ENCODE measurements at regions of chr16 and their contacts with region 1.

Region 1: GRCh38 chr16:56700195-56700594 is 17.9 kb downstream of the MT1X start:
- DNase-seq: no peak
- ATAC-seq: no peak
- H3K4me3 Mint-ChIP-seq: no peak overlapping the region
- H3K27ac Mint-ChIP-seq: no peak overlapping the region
- H3K4me1 Mint-ChIP-seq: peaks cover 10% of the 10 kb centered on the region
- H3K27me3 Mint-ChIP-seq: no peaks in the 10 kb centered on the region

Region 2: DNA sequence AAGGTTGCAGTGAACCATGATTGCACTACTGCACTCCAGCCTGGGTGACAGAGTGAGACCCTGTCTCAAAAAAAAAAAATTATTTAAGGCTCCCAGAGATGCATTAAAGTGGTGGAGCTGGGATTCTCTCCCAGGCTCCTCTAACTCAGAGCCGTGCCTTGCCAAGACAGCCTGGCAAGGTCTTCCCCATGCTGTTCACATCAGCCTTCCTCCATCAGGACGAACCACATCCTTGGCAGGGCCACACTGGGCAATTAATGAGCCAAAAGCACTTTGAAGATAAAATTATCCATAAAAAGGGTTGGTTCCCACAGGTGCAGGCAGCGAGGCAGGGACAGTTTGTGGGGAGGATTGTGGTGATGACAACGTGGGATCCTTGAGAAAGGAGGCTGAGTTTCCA is 160.5 kb before region 1 on chr16:
- POLR2A ChIA-PET with region 1: no interaction called
- DNase-seq: no peak
- ATAC-seq: no peak
- H3K4me3 Mint-ChIP-seq: no peak overlapping the region
- H3K27ac Mint-ChIP-seq: no peak overlapping the region
- H3K4me1 Mint-ChIP-seq: no peaks in the 10 kb centered on the region
- H3K27me3 Mint-ChIP-seq: peaks cover 20% of the 10 kb centered on the region

Region 3: GRCh38 chr16:56576585-56577293 is 123.5 kb before region 1 on chr16:
- POLR2A ChIA-PET with region 1: interaction called, 14 read pairs
- DNase-seq: peak; percentile 93
- ATAC-seq: peak; percentile 99
- H3K4me3 Mint-ChIP-seq: no peak overlapping the region
- H3K27ac Mint-ChIP-seq: peak overlapping the region; percentile 67
- H3K4me1 Mint-ChIP-seq: peaks cover 4% of the 10 kb centered on the region
- H3K27me3 Mint-ChIP-seq: peaks cover 11% of the 10 kb centered on the region

Region 4: GRCh38 chr16:56681939-56682702 is 18.1 kb before region 1 on chr16 and contains the start of gene MT1X:
- POLR2A ChIA-PET with region 1: interaction called, 28 read pairs
- DNase-seq: peak; percentile 95
- ATAC-seq: peak; percentile 94
- H3K4me3 Mint-ChIP-seq: peak within 1 kb of the TSS; percentile 97
- H3K27ac Mint-ChIP-seq: peak within 1 kb of the TSS; percentile 95
- H3K4me1 Mint-ChIP-seq: peaks cover 25% of the 10 kb centered on the region
- H3K27me3 Mint-ChIP-seq: no peaks in the 10 kb centered on the region
- total RNA-seq, gene MT1X: 35.0 to 35.4 TPM

Measured in activated naive CD8-positive, alpha-beta T cell treated with anti-CD3 and anti-CD28 coated beads, Interleukin-2, amount 10 ng/mL, durations not matched to agents 7 days and 5 days (primary cell).